ENCODE measurements at regions of chr20 and their contacts with region 1.

Region 1: DNA sequence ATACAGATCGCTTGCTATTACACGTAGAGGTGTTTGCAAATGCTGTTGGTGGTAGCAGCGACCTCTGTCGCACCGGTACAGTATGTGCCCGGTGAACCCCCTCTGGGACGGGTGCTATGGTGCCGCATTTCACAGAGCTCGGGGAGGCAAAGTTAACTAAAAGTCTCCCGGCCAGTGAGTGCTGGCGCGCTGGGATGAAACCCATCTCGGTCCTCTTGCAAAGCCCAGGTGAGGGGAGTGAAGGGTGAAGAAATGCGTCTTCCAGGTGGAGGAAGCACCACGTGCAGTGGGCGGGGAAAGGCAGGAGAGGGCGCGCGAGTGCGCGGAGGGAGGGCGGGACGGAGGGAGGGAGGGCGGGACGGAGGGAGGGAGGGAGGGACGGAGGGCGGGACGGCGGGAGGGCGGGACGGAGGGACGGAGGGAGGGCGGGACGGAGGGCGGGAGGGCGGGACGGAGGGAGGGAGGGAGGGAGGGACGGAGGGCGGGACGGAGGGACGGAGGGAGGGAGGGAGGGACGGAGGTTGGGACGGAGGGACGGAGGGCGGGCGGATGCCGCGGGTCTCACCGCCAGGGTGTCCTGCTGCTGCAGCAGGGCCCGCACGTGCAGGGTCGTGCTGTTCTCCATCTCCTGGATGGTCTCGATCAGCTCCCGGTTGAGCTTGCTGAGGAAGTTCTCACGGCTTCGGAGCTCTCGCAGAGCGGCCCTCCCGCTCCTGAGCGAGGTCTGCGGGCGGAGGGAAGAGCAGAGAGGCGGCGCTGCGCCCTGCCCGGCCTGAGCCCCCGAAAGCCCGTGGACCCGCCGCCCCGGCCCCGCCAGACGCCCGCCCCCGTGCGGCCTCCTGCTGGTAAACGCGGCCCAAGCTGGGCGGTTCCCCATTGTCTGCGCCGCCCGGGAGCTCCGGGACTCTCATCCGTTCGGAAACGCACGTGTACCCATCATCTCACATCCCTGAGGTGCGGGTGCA is 11.7 kb downstream of the C20orf96 start:
- DNase-seq: peak; percentile 75
- ATAC-seq: peak; percentile 79
- H3K4me3 Mint-ChIP-seq: peak overlapping the region; percentile 77
- H3K27ac Mint-ChIP-seq: peak overlapping the region; percentile 98
- H3K4me1 Mint-ChIP-seq: peaks cover 13% of the 10 kb centered on the region
- H3K27me3 Mint-ChIP-seq: peaks cover 27% of the 10 kb centered on the region
- CTCF ChIP-seq: no peak

Region 2: DNA sequence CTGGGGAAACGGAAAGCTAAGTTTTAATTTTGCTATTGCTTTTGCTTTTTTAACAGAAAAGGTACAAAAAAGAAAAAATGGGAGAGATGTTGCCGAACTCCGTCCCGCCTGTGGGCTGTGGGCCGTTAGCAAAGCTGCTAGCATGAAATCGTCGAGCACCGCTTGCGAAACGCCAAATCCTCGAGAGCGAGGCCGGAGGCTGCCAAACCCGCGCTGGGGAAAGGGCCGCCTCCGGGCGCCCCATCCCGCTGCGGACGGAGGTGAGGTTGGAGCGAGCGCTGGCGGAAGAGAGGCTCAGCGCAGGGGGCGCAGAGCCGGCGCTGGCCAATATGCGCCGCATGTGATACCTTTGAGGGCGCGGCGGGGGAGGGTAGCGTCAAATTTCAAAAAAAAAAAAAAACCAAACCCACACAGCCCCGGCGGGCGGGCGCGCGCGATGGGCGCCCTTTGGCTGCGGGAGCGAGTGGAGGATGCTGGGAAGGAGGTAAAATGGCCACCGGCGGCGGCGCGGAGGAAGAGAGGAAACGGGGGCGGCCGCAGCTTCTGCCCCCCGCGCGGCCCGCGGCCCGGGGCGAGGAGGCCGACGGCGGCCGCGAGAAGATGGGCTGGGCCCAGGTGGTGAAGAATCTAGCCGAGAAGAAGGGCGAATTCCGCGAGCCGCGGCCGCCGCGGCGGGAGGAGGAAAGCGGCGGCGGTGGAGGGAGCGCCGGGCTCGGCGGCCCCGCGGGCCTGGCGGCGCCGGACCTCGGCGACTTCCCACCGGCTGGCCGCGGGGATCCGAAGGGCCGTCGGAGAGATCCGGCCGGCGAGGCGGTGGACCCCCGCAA is 18.4 kb after region 1 on chr20 and contains the start of gene ZCCHC3:
- CTCF ChIA-PET with region 1: interaction called, 11 read pairs
- POLR2A ChIA-PET with region 1: interaction called, 8 read pairs
- DNase-seq: peak; percentile 88
- ATAC-seq: peak; percentile 82
- H3K4me3 Mint-ChIP-seq: peak within 1 kb of the TSS; percentile 100
- H3K27ac Mint-ChIP-seq: peak within 1 kb of the TSS; percentile 100
- H3K4me1 Mint-ChIP-seq: peaks cover 43% of the 10 kb centered on the region
- H3K27me3 Mint-ChIP-seq: peaks cover 37% of the 10 kb centered on the region
- CTCF ChIP-seq: no peak
- total RNA-seq, gene ZCCHC3: 43.6 to 54.1 TPM (median 52.6 TPM) in 3 replicates

Region 3: DNA sequence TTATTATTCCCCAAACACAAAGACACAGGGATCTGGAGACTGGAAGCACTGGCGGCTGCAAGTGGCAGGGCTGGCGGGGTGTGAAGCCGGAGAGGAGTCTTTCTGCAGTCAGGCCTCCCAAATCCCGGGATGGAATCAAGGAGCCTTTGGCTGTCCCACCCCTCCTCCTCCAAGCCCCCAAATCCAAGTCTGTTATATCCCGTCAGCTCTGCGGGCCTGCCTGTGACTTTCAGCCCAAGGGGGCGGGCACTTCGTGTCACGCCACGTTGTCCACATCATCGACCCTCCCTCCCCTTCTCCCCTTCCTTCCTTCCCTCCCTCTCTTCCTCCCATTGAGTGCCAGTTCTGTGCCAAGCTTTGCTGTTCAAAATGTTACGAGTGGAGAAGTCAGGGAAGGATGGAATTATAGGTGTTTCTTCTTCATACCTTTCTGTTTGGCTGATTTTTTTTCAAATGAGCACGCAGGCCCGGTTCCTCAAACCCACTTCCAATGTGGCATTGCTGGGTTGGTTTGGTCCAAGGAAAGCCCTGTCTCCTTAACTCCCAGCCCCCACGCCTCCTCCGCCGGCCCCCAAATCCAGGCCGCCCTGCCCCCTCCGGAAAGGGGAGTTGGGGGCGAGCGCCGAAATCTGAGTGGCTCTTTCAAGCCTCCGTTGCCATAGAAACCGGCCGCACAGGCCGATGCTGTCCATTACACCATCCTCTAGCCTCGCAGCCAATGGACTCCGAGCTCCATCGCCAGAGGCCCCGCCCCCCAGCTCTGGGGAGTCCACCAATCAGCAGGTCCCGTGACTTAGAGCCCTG is 31.2 kb after region 1 on chr20:
- CTCF ChIA-PET with region 1: interaction called, 25 read pairs
- POLR2A ChIA-PET with region 1: interaction called, 3 read pairs
- DNase-seq: peak; percentile 99
- ATAC-seq: peak; percentile 98
- H3K4me3 Mint-ChIP-seq: peak overlapping the region; percentile 72
- H3K27ac Mint-ChIP-seq: peak overlapping the region; percentile 100
- H3K4me1 Mint-ChIP-seq: peaks cover 36% of the 10 kb centered on the region
- H3K27me3 Mint-ChIP-seq: peaks cover 5% of the 10 kb centered on the region
- CTCF ChIP-seq: no peak

Region 4: DNA sequence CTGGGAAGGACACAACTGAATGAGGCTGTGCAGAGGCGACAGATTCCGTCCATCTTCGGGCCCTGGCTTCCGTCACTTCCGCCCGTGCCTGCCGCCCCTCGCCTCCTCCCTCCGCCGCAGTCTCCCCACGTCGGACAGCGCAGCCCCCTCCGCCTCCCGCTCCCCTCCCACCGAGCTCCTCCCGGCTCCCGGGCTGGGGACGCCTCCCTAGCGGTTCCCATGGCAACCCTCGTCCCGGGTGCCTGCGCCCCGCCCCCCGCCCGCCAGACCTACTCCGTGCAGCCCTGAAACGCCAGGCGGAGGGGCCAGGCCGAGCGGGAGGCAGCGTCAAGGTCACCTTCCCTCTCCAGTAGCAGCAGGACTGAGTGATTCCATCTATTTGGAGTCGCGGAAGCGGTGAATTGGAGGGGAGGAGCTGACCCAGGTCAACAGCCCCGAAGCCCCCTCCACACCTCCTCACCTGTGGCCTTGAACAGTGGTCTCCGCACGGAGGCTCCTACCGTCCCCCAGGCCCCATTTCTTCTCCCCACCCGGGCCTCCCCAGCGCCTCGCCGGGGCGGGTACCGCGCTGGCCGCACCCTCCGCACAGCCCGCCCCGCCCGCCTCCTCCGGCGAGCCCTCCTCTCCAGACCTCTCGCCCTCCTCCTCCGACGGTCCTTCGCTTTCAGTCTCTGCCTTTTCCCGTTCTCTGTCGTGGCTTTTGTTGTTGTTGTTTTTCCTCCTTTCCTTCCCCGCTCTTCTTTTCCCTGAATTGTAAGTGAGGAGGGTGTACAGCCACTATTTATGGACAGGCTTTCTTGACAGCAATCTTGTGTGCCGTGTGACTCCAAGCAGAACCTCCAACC is 69.0 kb after region 1 on chr20:
- CTCF ChIA-PET with region 1: interaction called, 13 read pairs
- POLR2A ChIA-PET with region 1: interaction called, 3 read pairs
- DNase-seq: peak; percentile 97
- ATAC-seq: peak; percentile 80
- H3K4me3 Mint-ChIP-seq: peak overlapping the region; percentile 89
- H3K27ac Mint-ChIP-seq: peak overlapping the region; percentile 93
- H3K4me1 Mint-ChIP-seq: peaks cover 17% of the 10 kb centered on the region
- H3K27me3 Mint-ChIP-seq: peaks cover 15% of the 10 kb centered on the region
- CTCF ChIP-seq: no peak

Region 5: GRCh38 chr20:381581-382290 is 102.8 kb after region 1 on chr20:
- CTCF ChIA-PET with region 1: no interaction called
- POLR2A ChIA-PET with region 1: no interaction called
- DNase-seq: peak; percentile 50
- ATAC-seq: peak; percentile 49
- H3K4me3 Mint-ChIP-seq: peak overlapping the region; percentile 66
- H3K27ac Mint-ChIP-seq: no peak overlapping the region
- H3K4me1 Mint-ChIP-seq: no peaks in the 10 kb centered on the region
- H3K27me3 Mint-ChIP-seq: peaks cover 25% of the 10 kb centered on the region
- CTCF ChIP-seq: no peak